ENCODE measurements at regions of chr6 and their contacts with region 1.

Region 1: GRCh38 chr6:28212510-28213212 is 12.4 kb upstream of the ZSCAN9 start:
- DNase-seq: peak; percentile 34
- H3K4me3 Mint-ChIP-seq: peak overlapping the region; percentile 76
- H3K27ac Mint-ChIP-seq: peak overlapping the region; percentile 47
- H3K4me1 Mint-ChIP-seq: peaks cover 30% of the 10 kb centered on the region
- H3K27me3 Mint-ChIP-seq: peaks cover 80% of the 10 kb centered on the region

Region 2: GRCh38 chr6:28225056-28225834 is 12.6 kb after region 1 on chr6 and contains the start of gene ZSCAN9:
- intact Hi-C with region 1: no loop called
- DNase-seq: no peak
- H3K4me3 Mint-ChIP-seq: peak within 1 kb of the TSS; percentile 88
- H3K27ac Mint-ChIP-seq: peak within 1 kb of the TSS; percentile 82
- H3K4me1 Mint-ChIP-seq: peaks cover 35% of the 10 kb centered on the region
- H3K27me3 Mint-ChIP-seq: peaks cover 16% of the 10 kb centered on the region
- total RNA-seq, gene ZSCAN9: 9.7 and 10.8 TPM in 2 replicates

Region 3: DNA sequence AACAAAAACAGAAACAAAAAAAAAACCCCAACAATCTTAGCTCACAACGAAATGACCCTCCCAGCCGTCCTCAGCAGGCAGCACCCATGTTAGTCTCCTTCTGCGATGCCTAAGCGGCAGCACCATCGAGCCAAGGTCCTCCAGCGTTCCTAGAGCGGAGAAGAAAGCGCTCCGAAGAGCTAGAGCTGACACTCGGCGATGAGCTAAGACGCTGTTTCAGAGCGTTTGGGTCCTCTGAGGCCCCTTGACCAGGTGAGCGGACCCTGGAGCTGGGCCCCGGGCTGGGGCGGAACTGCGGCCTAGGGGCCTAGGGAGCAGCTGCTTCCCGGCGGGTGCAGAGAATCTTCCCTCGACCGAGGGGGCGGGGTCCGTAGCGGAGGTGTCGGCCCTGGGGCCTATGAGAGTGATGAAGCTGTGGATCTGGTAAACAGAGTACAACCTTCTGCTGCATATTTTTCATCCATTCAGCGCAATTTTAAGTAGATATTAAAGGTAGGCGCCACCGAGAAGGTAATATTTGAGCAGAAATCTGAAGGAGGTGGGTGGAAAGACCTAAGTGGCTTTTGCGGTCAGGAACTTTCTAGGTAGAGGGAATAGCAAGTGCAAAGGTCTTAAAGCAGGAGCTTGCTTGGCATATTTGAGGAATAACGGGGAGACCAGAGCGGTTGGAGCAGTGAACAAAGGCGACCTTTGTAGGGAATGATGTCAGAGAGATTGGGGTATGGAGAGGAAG is 54.5 kb after region 1 on chr6 and contains the start of gene ZSCAN26:
- intact Hi-C with region 1: loop called (anchors 5 kb)
- DNase-seq: peak; percentile 79
- H3K4me3 Mint-ChIP-seq: no peak within 1 kb of the TSS
- H3K27ac Mint-ChIP-seq: no peak within 1 kb of the TSS
- H3K4me1 Mint-ChIP-seq: peaks cover 28% of the 10 kb centered on the region
- H3K27me3 Mint-ChIP-seq: peaks cover 10% of the 10 kb centered on the region
- total RNA-seq, gene ZSCAN26: 6.1 and 7.7 TPM in 2 replicates

Region 4: GRCh38 chr6:28281288-28282064 is 68.8 kb after region 1 on chr6 and contains the start of gene PGBD1:
- intact Hi-C with region 1: no loop called
- DNase-seq: peak; percentile 40
- H3K4me3 Mint-ChIP-seq: peak within 1 kb of the TSS; percentile 85
- H3K27ac Mint-ChIP-seq: no peak within 1 kb of the TSS
- H3K4me1 Mint-ChIP-seq: peaks cover 12% of the 10 kb centered on the region
- H3K27me3 Mint-ChIP-seq: no peaks in the 10 kb centered on the region
- total RNA-seq, gene PGBD1: 3.4 and 3.8 TPM in 2 replicates

Region 5: GRCh38 chr6:28355743-28356665 is 143.3 kb after region 1 on chr6:
- intact Hi-C with region 1: loop called (anchors 5 kb)
- DNase-seq: peak; percentile 41
- H3K4me3 Mint-ChIP-seq: peak overlapping the region; percentile 86
- H3K27ac Mint-ChIP-seq: peak overlapping the region; percentile 72
- H3K4me1 Mint-ChIP-seq: peaks cover 17% of the 10 kb centered on the region
- H3K27me3 Mint-ChIP-seq: no peaks in the 10 kb centered on the region

Measured in activated T-helper 2 cell treated with anti-CD3 and anti-CD28 coated beads, Interferon-gamma antibody, Interleukin-2, Interleukin-4, amounts not matched to agents 10 μg/mL and 5 μg/mL and 100 μg/mL, durations not matched to agents 14 hours and 24 hours and 36 hours (primary cell).